ENCODE measurements at regions of chr1 and their contacts with region 1.

Region 1: DNA sequence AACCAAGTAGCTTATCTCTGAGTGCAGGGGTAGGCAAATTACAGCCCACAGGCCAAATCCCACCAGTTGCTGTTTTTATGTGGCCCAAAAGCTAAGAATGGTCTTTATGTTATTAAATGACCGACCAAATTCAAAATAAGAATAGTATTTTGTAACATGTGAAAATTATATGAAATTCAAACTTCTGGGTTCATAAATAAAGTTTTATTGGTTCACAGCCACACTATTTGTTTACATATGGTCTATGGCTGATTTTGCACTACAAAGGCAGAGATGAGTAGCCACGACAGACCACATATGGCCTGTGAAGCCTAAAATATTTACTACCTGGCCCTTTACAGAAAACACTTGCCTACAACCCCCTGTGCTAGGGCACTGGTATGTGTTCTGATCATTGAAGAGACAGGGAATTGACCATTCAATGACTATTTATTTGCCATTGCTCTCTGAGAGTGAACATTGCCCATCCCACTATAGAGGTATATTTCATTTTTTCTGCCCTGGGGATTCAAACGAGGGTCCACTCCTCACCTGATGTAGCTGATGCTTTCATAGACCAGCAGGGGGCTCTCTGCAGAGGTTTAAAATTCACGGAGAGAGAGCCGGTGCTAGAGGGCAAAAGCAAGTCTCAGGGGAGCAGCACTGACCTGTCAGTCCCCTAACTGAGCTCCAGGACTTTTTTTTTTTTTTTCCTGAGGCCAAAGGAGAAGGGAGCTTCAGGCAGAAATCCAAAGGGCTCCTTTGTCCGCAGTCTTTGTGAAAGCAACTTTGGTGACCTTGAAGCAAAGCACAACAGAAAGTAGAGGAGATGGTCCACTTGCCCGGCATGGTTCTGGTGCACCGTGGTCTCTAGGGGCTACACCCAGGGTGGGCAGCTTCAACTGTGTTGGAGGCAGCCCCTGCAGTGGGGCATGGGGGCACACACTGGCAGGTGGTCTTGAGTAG is 7.3 kb upstream of the GNL2 start:
- DNase-seq: peak; percentile 40 to 61 (median 48)
- H3K4me3 ChIP-seq: no peak overlapping the region
- H3K27ac ChIP-seq: no peak overlapping the region
- H3K4me1 ChIP-seq: peaks cover 0 to 2% (median 0%) of the 10 kb centered on the region in 4 experiments
- H3K27me3 ChIP-seq: peaks cover 0 to 9% (median 0%) of the 10 kb centered on the region in 5 experiments

Region 2: GRCh38 chr1:37616330-37616729 is 13.3 kb after region 1 on chr1:
- CTCF ChIA-PET with region 1: interaction called, 10 read pairs
- POLR2A ChIA-PET with region 1: no interaction called
- DNase-seq: no peak
- H3K4me3 ChIP-seq: no peak overlapping the region
- H3K27ac ChIP-seq: no peak overlapping the region
- H3K4me1 ChIP-seq: peaks cover 0 to 1% (median 0%) of the 10 kb centered on the region in 4 experiments
- H3K27me3 ChIP-seq: peaks cover 0 to 61% (median 21%) of the 10 kb centered on the region in 5 experiments

Region 3: DNA sequence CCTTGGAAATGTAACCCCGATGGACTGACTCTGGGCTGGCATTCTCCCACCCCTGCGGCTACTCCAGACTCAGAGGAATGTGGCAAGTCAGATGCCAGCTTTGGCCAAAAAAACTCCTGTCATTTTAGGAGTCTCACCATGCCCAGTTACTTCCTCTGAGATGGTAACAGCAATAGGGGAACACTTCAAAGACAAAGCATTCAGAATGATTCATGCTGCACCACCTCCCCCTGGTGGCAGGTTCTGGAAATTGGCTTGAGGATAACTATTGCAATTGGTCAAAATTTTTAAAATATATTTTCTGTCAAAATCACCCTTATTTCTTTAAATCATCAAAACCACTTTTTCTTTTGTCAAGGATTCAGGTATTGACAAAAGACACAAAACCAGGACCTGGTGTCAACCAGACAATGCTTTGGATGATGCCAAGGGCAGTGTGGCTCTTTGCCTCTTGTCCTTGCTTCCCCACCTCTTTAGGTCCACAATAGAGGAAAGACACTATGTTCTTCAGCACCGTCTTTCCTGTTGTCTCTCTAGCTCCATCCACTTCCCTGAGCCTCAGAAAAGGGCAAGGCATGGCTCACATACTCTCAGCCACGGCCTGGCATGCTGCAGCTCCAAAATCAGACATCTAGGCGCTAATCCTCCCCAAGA is 79.4 kb after region 1 on chr1:
- CTCF ChIA-PET with region 1: interaction called, 187 read pairs
- POLR2A ChIA-PET with region 1: interaction called, 3 read pairs
- DNase-seq: peak; percentile 75 to 87 (median 81)
- H3K4me3 ChIP-seq: no peak overlapping the region
- H3K27ac ChIP-seq: no peak overlapping the region
- H3K4me1 ChIP-seq: peaks cover 0 to 2% (median 0%) of the 10 kb centered on the region in 4 experiments
- H3K27me3 ChIP-seq: no peaks in the 10 kb centered on the region

Region 4: GRCh38 chr1:37692078-37692833 is 89.2 kb after region 1 on chr1 and contains the start of gene CDCA8:
- CTCF ChIA-PET with region 1: interaction called, 11 read pairs
- POLR2A ChIA-PET with region 1: no interaction called
- DNase-seq: peak; percentile 98 to 99 (median 99)
- H3K4me3 ChIP-seq: peak within 1 kb of the TSS; percentile 61 to 99 (median 98)
- H3K27ac ChIP-seq: peak within 1 kb of the TSS in 1 of 2 experiments; percentile 91
- H3K4me1 ChIP-seq: peaks cover 16 to 40% (median 31%) of the 10 kb centered on the region in 4 experiments
- H3K27me3 ChIP-seq: no peaks in the 10 kb centered on the region